ENCODE measurements at regions of chr19 and their contacts with region 1.

Region 1: DNA sequence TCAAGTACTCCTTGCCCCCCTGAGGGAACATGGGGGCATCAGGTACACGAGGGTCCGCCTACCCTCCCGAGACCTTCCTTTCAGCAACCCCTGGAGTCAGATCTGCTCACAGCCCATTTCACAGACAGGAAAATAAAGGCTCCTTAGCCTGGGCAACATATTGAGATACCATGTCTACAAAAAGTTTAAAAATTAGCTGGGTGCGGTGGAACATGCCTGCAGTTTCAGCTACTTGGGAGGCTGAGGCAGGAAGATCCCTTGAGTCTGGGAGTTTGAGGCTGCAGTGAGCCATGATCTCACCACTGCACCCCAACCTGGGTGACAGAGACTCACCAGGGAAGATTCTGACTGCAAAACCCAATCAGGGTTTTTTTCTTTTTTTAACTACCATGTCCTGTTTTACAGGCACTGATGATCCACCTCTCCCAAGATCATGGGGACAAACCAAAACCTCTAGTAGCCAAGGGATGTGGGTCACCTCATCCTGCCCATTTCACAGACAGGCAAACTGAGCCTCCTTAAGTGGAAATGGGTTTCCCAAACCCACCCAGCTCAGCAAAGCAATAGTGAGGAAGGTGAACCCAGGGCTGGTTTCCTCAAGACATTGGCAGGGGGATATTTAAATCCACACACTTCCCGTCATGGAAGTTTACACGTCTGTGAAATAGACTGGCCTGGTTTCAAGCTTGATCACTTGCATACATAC is 6.4 kb upstream of the CDKN2D start:
- DNase-seq: no peak
- H3K4me3 ChIP-seq: no peak overlapping the region
- H3K27ac ChIP-seq: no peak overlapping the region
- H3K4me1 ChIP-seq: peaks cover 5% of the 10 kb centered on the region
- H3K27me3 ChIP-seq: no peaks in the 10 kb centered on the region
- CTCF ChIP-seq: no peak
- POLR2A ChIP-seq: no peak

Region 2: DNA sequence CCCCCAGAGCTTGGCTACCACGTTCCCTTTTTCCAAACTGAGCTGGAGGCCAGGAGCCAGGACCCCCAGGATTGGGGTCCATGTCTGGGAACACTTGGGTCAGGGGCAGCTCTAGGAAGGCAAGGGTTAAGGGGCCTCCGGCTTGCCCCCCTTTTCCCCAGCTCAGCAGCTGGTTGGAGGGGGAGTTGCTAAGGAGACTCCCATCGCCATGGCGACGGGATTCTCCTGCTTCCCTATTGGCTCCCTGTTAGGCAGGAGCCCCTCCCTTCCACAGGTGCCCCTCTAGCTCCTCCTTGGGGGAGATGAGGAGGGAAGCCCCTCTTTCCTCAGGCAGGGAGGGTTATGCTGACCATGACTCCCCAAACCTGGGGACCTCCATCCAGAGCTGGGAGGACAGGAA is 120.9 kb before region 1 on chr19:
- intact Hi-C with region 1: no loop called
- DNase-seq: peak; percentile 64
- H3K4me3 ChIP-seq: no peak overlapping the region
- H3K27ac ChIP-seq: no peak overlapping the region
- H3K4me1 ChIP-seq: no peaks in the 10 kb centered on the region
- H3K27me3 ChIP-seq: no peaks in the 10 kb centered on the region
- CTCF ChIP-seq: no peak
- POLR2A ChIP-seq: no peak

Region 3: GRCh38 chr19:10478903-10479384 is 96.2 kb before region 1 on chr19:
- intact Hi-C with region 1: loop called (anchors 10 kb)
- DNase-seq: peak; percentile 95
- H3K4me3 ChIP-seq: peak overlapping the region; percentile 22 to 47
- H3K27ac ChIP-seq: no peak overlapping the region
- H3K4me1 ChIP-seq: peaks cover 10% of the 10 kb centered on the region
- H3K27me3 ChIP-seq: no peaks in the 10 kb centered on the region
- CTCF ChIP-seq: peak in 1 of 3 experiments; percentile 68
- POLR2A ChIP-seq: no peak

Region 4: GRCh38 chr19:10644260-10645007 is 69.3 kb after region 1 on chr19:
- intact Hi-C with region 1: loop called (anchors 5 kb)
- DNase-seq: peak; percentile 86
- H3K4me3 ChIP-seq: no peak overlapping the region
- H3K27ac ChIP-seq: peak overlapping the region; percentile 20 to 74
- H3K4me1 ChIP-seq: peaks cover 18% of the 10 kb centered on the region
- H3K27me3 ChIP-seq: no peaks in the 10 kb centered on the region
- CTCF ChIP-seq: peak; percentile 72 to 82 (median 72)
- POLR2A ChIP-seq: no peak

Measured in testis (tissue), 5 donors.